ENCODE measurements at regions of chr17 and their contacts with region 1.

Region 1: GRCh38 chr17:17739388-17740066 is 58.3 kb downstream of the RAI1 start:
- DNase-seq: peak; percentile 42 to 97 (median 68)

Region 2: GRCh38 chr17:17778308-17779014 is 38.9 kb after region 1 on chr17:
- intact Hi-C with region 1: loop called (anchors 5 kb)
- DNase-seq: peak in 4 of 10 donors; percentile 47 to 94 (median 77)